ENCODE measurements at regions of chr1 and their contacts with region 1.

Region 1: GRCh38 chr1:198657550-198658064 is 18.8 kb downstream of the PTPRC start:
- DNase-seq: peak; percentile 52
- ATAC-seq: peak; percentile 40
- H3K4me3 Mint-ChIP-seq: peak overlapping the region; percentile 71
- H3K27ac Mint-ChIP-seq: peak overlapping the region; percentile 96
- H3K4me1 Mint-ChIP-seq: peaks cover 64% of the 10 kb centered on the region
- H3K27me3 Mint-ChIP-seq: no peaks in the 10 kb centered on the region
- CTCF ChIP-seq: no peak

Region 2: DNA sequence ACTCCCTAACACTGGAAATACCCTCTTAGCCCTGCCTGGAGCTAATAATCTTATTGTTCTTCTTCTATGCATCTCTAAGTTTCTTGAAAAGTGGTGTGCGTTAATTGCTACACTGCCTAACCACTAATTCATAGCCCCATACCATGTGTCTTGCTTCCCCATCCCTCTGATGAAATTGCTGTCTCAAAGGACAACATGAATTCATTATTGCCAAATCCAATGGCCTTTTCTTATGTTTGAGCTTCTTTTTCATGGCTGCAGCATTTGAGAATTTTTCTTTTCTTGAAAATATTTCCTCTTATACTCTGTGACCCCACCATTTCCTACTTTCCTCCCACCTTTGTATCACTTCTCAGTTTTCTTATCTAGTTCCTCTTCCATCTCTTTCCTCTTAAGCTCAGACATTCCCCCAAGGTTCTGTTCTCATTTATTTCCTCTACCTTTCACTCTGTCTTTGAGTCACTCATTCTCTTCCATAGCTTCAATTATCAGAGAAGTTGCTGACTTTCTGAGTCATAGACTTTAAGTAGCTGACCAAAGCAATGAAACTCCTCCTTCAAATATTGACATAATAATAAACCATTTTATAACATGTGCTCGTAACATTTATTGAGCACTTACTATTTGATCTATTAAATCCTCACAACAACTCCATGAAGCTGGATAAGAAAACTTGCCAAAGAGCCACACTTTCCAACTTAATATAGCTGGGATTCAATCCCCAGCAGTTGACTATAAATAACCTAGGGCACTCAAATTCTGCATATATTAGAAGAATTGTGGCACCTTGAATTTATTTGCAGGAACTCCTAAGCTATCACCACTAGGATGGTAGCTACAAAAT is 81.6 kb before region 1 on chr1:
- CTCF ChIA-PET with region 1: no interaction called
- POLR2A ChIA-PET with region 1: no interaction called
- intact Hi-C with region 1: no loop called
- DNase-seq: no peak
- ATAC-seq: no peak
- H3K4me3 Mint-ChIP-seq: no peak overlapping the region
- H3K27ac Mint-ChIP-seq: peak overlapping the region; percentile 22
- H3K4me1 Mint-ChIP-seq: peaks cover 12% of the 10 kb centered on the region
- H3K27me3 Mint-ChIP-seq: no peaks in the 10 kb centered on the region
- CTCF ChIP-seq: no peak

Region 3: GRCh38 chr1:198669023-198669698 is 11.6 kb after region 1 on chr1:
- CTCF ChIA-PET with region 1: interaction called, 3 read pairs
- POLR2A ChIA-PET with region 1: interaction called, 26 read pairs
- intact Hi-C with region 1: no loop called
- DNase-seq: peak; percentile 57
- ATAC-seq: peak; percentile 78
- H3K4me3 Mint-ChIP-seq: peak overlapping the region; percentile 25
- H3K27ac Mint-ChIP-seq: peak overlapping the region; percentile 93
- H3K4me1 Mint-ChIP-seq: peaks cover 87% of the 10 kb centered on the region
- H3K27me3 Mint-ChIP-seq: no peaks in the 10 kb centered on the region
- CTCF ChIP-seq: no peak